ENCODE measurements at regions of chr13 and their contacts with region 1.

Region 1: DNA sequence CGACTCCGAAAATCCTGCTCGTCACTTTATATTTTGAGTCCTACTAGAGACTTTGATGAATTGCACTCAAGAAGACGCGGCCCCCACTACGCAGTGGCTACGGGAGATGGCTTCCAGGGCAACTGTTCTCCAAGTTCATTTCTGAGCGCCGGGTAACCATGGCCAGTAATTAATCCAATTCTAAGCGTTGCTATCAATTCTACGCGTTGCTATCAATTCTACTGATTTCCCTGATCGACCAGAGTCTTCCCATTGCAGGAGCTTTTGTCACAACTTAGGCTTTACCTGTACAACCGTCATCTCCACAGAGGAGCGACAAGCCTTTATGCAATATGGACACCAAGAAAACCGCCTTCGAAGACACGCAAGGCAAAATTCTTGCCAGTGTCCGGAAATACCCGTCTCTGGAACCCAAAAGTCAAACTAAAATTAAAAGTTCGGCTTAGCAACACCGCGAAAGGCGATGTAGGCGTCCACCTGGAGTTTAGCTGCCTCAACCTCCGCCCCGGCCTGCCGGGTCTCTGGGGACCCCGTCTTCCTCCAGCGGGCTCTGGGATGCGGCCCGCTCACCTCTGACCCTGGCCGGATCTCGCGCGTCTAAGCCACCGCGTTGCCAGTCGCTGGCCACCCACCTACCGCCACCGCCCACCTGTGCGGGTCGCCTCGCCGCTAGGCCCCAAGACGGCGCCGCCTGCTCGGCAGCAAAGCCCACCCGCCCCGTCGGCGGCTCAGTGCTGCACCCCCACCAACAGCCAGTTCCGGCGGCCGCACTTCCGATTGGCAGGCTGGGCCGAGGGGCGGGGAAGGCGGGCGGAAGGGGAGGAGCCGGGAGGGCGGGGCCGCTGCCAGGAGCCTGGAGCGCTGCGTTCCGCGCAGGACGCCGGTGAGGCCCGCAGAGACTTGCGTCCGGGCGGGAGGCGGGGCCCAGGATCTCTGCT is at the start of gene SUPT20H:
- DNase-seq: peak; percentile 92
- ATAC-seq: peak; percentile 94
- H3K4me3 Mint-ChIP-seq: peak within 1 kb of the TSS; percentile 96
- H3K27ac Mint-ChIP-seq: peak within 1 kb of the TSS; percentile 97
- H3K4me1 Mint-ChIP-seq: peaks cover 29% of the 10 kb centered on the region
- H3K27me3 Mint-ChIP-seq: no peaks in the 10 kb centered on the region
- CTCF ChIP-seq: no peak
- total RNA-seq, gene SUPT20H: 61.9 and 66.6 TPM in 2 replicates

Region 2: GRCh38 chr13:36818804-36819738 is 240.1 kb before region 1 on chr13 and contains the start of gene RFXAP:
- CTCF ChIA-PET with region 1: no interaction called
- POLR2A ChIA-PET with region 1: no interaction called
- intact Hi-C with region 1: loop called (anchors 2 kb)
- DNase-seq: peak; percentile 93
- ATAC-seq: peak; percentile 94
- H3K4me3 Mint-ChIP-seq: peak within 1 kb of the TSS; percentile 93
- H3K27ac Mint-ChIP-seq: peak within 1 kb of the TSS; percentile 90
- H3K4me1 Mint-ChIP-seq: peaks cover 44% of the 10 kb centered on the region
- H3K27me3 Mint-ChIP-seq: peaks cover 6% of the 10 kb centered on the region
- CTCF ChIP-seq: no peak
- total RNA-seq, gene RFXAP: 8.8 and 9.6 TPM in 2 replicates

Region 3: DNA sequence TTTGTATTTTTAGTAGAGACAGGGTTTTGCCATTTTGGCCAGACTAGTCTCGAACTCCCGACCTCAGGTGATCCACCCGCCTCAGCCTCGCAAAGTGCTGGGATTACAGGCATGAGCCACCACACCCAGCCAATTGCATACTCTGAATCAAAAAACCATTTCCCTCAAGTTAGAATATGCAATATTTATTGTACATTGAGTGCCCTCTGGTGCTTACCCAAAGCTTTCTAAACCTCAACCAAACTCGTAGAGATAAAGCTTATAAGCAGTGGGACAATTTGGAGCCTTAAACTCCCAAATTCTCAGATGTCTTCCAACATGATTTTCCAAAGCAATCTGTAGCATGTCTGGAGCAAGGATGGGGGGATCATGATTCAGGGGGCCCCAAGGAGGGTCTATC is 217.8 kb before region 1 on chr13:
- CTCF ChIA-PET with region 1: no interaction called
- POLR2A ChIA-PET with region 1: no interaction called
- intact Hi-C with region 1: no loop called
- DNase-seq: no peak
- ATAC-seq: no peak
- H3K4me3 Mint-ChIP-seq: no peak overlapping the region
- H3K27ac Mint-ChIP-seq: no peak overlapping the region
- H3K4me1 Mint-ChIP-seq: no peaks in the 10 kb centered on the region
- H3K27me3 Mint-ChIP-seq: no peaks in the 10 kb centered on the region
- CTCF ChIP-seq: no peak

Region 4: DNA sequence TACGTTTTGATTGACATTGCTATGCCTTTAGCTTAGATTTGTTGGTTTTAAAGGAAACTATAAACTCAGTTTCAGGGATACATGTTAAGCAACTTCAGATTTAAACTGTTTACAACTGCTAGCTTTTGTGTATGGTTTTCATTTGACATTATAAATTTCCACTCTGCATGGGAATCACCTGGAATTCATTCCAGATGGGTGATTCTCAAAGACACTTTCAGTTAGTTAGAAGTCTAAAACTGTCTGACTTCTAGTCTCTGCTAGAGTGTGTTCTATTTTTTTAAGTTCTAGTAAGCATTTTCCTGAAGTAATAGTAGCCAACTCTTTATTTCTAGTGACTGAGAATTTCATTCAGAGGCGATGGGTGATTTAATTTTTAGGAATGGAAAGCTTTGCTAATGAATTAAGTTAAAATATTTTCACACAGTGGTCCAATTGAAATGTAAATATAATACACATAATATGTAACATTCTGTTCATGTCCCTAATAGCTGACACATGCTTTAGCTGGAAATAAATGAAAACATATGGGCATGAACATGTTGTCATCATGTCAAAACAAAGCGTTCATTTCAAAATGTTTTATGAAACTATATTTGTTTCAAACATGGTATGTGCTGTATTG is 104.6 kb after region 1 on chr13:
- CTCF ChIA-PET with region 1: no interaction called
- POLR2A ChIA-PET with region 1: no interaction called
- intact Hi-C with region 1: no loop called
- DNase-seq: no peak
- ATAC-seq: no peak
- H3K4me3 Mint-ChIP-seq: no peak overlapping the region
- H3K27ac Mint-ChIP-seq: no peak overlapping the region
- H3K4me1 Mint-ChIP-seq: no peaks in the 10 kb centered on the region
- H3K27me3 Mint-ChIP-seq: no peaks in the 10 kb centered on the region
- CTCF ChIP-seq: no peak

Region 5: GRCh38 chr13:39025433-39025839 is 1966.3 kb after region 1 on chr13:
- CTCF ChIA-PET with region 1: no interaction called
- POLR2A ChIA-PET with region 1: no interaction called
- intact Hi-C with region 1: loop called (anchors 5 kb)
- DNase-seq: no peak
- ATAC-seq: no peak
- H3K4me3 Mint-ChIP-seq: no peak overlapping the region
- H3K27ac Mint-ChIP-seq: no peak overlapping the region
- H3K4me1 Mint-ChIP-seq: no peaks in the 10 kb centered on the region
- H3K27me3 Mint-ChIP-seq: no peaks in the 10 kb centered on the region
- CTCF ChIP-seq: no peak

Region 6: DNA sequence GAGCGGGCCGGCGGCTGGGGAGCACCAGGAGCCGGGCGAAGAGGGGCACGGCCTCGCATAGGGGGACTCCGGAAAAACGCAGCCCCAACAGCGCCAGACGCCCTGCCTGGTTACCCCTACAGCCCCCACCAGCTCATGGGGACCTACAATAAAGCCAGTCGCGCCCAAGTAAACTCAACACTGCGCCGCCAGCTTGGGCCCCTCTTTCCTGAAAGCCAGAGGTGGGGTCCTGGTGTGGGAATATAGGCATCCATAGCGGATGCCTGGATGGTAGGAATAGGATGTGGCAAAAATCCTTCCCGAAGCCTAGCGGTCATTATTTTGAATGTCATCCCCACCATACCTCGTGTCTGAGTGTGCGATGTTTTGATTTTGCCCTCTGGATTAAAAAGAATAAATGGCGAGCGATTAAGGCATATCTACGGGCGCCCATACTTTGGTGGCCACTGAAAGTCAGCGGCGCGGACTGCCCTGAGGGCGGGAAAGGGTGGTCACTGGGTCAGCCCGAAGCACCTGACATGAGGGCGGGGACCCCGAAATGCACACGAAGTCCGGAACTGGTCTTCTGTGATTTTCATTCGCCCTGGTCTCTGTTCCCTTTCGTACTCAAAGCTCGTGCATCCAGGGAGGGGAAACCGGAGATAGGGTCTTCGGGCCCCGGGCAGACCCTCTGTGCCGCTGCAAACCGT is 1978.8 kb after region 1 on chr13 and contains the starts of genes NHLRC3 and PROSER1:
- CTCF ChIA-PET with region 1: no interaction called
- POLR2A ChIA-PET with region 1: interaction called, 3 read pairs
- intact Hi-C with region 1: loop called (anchors 1 kb)
- DNase-seq: peak; percentile 73
- ATAC-seq: peak; percentile 78
- H3K4me3 Mint-ChIP-seq: peak within 1 kb of the TSS; percentile 87
- H3K27ac Mint-ChIP-seq: peak within 1 kb of the TSS; percentile 99
- H3K4me1 Mint-ChIP-seq: peaks cover 47% of the 10 kb centered on the region
- H3K27me3 Mint-ChIP-seq: no peaks in the 10 kb centered on the region
- CTCF ChIP-seq: no peak
- total RNA-seq, gene NHLRC3: 17.3 and 24.6 TPM in 2 replicates
- total RNA-seq, gene PROSER1: 57.3 and 57.8 TPM in 2 replicates

Measured in activated B cell treated with CpG ODN at 0.5 μM for 24 hours (primary cell).